GM23248 (cell line): ENCODE measurements at regions of chr7 and their contacts with region 1.

Region 1: DNA sequence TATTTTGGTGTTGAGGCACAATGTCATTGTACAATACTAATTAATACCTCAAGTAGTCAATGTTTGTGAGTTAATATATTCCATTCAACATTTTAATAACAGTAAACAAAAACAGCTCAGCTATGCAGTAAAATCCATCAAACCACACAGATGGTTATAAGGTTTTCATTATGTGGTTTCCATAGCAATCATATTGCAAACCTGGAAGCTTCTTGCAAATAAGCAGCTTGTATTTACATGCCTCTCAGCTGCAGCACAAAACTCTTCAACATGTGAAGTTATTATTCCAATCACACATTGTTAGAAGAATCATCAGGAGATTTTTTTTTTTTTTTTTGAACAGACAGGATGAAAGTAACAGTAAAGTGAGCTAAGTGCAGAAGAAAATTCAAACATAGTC is 170.2 kb downstream of the SKAP2 start:
- DNase-seq: no peak
- H3K4me3 ChIP-seq: no peak overlapping the region
- H3K27ac ChIP-seq: no peak overlapping the region
- H3K4me1 ChIP-seq: no peaks in the 10 kb centered on the region
- H3K27me3 ChIP-seq: no peaks in the 10 kb centered on the region

Region 2: DNA sequence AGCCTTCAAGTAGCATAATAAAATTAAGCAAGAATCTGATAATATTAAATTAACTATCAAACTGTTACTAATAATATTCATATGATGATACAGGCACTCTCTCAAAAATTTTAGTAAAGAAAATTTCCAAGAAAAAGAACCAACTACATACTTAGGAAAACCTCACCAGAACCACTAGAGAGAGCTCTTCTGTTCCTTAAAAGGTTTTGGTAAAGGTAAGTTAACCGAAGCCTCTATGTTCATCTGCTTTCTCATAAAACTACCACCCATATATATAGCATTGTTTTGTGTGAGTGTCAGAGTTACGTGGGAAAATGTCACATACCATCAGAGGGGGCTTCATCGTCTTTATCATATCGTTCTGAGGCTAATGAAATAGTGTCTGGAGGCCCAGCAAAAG is 149.6 kb after region 1 on chr7:
- in situ Hi-C with region 1: loop called (anchors 10 kb)
- DNase-seq: peak; percentile 40
- H3K4me3 ChIP-seq: no peak overlapping the region
- H3K27ac ChIP-seq: no peak overlapping the region
- H3K4me1 ChIP-seq: no peaks in the 10 kb centered on the region
- H3K27me3 ChIP-seq: no peaks in the 10 kb centered on the region